ENCODE measurements at regions of chr19 and their contacts with region 1.

Region 1: DNA sequence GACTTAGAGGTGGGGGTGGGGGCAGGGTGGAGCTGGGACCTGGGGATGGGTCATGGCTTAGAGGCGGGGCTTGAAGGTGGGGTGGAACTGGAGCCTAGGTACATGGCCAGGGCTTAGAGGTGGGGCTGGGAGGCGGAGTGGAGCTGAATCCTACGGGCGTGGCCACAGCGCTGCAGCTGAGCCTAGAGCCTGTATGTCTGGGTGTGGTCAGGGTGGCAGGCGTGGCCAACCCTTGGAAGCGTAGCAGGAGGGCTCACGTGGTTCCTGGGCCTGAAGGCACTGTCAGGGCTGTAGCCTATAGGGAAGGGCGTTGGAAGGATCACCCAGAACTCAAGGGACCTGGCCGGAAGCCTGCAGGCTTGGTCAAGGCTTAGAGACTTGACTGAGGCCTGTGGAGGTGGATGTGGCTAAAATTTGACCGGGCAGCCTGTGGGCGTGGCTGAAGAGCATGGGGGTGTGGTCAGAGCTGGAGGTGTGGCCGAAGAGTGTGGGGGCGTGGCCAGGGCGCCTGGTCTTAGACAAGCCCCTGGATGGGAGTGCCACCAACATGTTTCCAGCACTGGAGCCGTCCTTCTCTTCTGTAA is 24.3 kb downstream of the COLGALT1 start:
- DNase-seq: peak; percentile 93
- H3K27ac ChIP-seq: peak overlapping the region; percentile 76
- CTCF ChIP-seq: no peak

Region 2: DNA sequence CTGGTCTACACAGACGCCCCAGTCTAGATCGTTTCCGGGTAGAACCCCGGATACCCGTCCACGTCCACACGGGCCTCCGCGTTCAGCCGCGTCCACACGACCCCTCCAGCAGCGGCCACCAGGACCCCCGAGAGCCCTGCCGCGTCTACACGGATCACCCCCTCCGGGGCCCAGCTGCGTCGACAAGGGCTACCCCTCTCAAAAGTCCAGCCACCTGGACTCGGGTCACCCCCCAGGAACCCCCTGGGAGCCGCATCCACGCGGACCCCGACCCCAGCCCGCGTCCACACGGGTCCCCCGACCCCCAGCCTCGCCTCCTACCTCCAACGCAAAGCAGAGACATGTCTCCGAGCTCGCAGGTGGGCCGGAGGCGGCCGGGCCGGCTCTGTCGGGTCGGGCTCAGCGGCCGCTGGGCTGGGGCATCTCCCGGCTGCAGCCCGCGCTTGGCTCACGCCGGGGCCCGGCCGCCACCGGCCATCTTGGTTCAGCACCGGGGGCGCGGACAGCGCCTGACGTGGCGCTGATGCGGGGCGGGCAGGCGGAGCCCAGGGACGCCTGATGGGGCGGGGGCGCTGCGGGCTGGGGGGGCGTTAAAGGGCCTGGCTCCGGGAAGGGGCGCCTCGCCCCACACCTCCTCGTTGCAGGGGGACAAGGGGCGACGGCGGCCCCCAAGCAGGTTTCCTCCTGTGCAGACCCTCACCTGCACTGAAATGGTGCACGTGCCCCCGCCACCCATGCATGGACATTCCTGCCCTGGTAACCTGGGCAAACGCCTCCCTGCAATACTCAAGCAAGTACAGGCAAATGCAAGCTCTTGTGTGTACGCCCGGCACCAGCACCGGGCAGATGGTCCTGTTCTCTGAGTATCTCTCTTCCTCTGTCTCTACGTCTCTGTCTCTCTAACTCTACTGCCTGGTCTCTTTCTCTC is 108.4 kb after region 1 on chr19 and contains the start of gene UNC13A:
- CTCF ChIA-PET with region 1: no interaction called
- POLR2A ChIA-PET with region 1: interaction called, 11 read pairs
- DNase-seq: peak; percentile 73
- H3K27ac ChIP-seq: no peak within 1 kb of the TSS
- CTCF ChIP-seq: no peak

Measured in RWPE1 (cell line).